Right ventricle myocardium superior (tissue), 1 donor: ENCODE measurements at regions of chr2 and their contacts with region 1.

Region 1: DNA sequence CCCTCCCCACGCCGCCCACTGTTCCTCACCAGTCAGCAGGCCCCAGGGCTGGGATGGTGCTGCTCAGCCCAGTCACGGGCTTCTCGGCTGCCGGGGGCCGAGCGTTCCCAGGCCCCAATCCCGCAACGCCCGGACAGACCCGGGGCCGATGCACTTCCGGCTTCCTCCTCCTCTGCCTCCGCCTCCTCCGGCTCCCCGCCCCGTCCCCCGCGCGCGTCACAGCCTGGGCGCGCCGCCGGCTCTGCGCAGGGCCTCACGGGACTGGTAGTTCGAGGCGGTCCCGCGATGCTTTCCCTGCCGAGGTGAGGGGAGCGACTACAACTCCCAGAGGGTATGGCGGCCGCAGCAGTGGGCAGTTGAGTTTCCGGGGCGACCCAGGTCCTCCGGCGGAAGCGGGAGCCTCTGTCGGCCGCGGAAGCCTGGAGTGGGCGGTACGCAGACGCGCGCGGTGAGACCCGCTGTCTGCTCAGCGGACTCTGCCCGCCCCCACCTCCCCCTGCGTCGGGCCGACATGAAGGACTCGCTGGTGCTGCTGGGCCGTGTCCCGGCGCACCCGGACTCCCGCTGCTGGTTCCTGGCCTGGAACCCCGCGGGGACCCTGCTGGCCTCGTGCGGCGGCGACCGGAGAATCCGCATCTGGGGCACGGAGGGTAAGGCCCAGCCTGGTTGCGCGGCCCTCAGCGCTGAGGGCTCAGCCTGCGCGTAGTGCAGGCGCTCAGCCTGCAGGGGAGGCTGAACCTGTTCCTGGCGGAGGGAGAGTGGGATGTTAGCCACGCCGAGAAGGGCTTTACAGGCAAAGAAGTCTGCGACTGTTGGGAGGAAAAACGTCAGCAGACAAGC is at the starts of genes CIAO1 and TMEM127:
- DNase-seq: peak; percentile 99
- ATAC-seq: peak; percentile 95
- total RNA-seq, gene CIAO1: 62.3 TPM
- total RNA-seq, gene TMEM127: 67.3 TPM

Region 2: GRCh38 chr2:96145036-96145847 is 120.8 kb before region 1 on chr2 and contains the start of gene DUSP2:
- intact Hi-C with region 1: loop called (anchors 10 kb)
- DNase-seq: peak; percentile 86
- ATAC-seq: peak; percentile 94
- total RNA-seq, gene DUSP2: 1.5 TPM